MCF 10A (cell line): ENCODE measurements at regions of chr18 and their contacts with region 1.

Region 1: GRCh38 chr18:35513181-35513936 is 15.6 kb upstream of the INO80C start:
- DNase-seq: peak; percentile 86
- H3K4me3 Mint-ChIP-seq: peak overlapping the region; percentile 22
- H3K27ac Mint-ChIP-seq: peak overlapping the region; percentile 89
- H3K4me1 Mint-ChIP-seq: peaks cover 39% of the 10 kb centered on the region
- H3K27me3 Mint-ChIP-seq: no peaks in the 10 kb centered on the region
- CTCF ChIP-seq: no peak

Region 2: GRCh38 chr18:35432565-35433001 is 80.8 kb before region 1 on chr18:
- CTCF ChIA-PET with region 1: no interaction called
- POLR2A ChIA-PET with region 1: no interaction called
- intact Hi-C with region 1: no loop called
- DNase-seq: no peak
- H3K4me3 Mint-ChIP-seq: no peak overlapping the region
- H3K27ac Mint-ChIP-seq: no peak overlapping the region
- H3K4me1 Mint-ChIP-seq: no peaks in the 10 kb centered on the region
- H3K27me3 Mint-ChIP-seq: no peaks in the 10 kb centered on the region
- CTCF ChIP-seq: no peak

Region 3: GRCh38 chr18:35526476-35527120 is 13.2 kb after region 1 on chr18:
- CTCF ChIA-PET with region 1: interaction called, 5 read pairs
- POLR2A ChIA-PET with region 1: interaction called, 15 read pairs
- intact Hi-C with region 1: no loop called
- DNase-seq: peak; percentile 85
- H3K4me3 Mint-ChIP-seq: peak overlapping the region; percentile 64
- H3K27ac Mint-ChIP-seq: peak overlapping the region; percentile 24
- H3K4me1 Mint-ChIP-seq: peaks cover 22% of the 10 kb centered on the region
- H3K27me3 Mint-ChIP-seq: no peaks in the 10 kb centered on the region
- CTCF ChIP-seq: no peak

Region 4: GRCh38 chr18:36179562-36180355 is 666.4 kb after region 1 on chr18:
- CTCF ChIA-PET with region 1: no interaction called
- POLR2A ChIA-PET with region 1: no interaction called
- intact Hi-C with region 1: no loop called
- DNase-seq: peak; percentile 90
- H3K4me3 Mint-ChIP-seq: no peak overlapping the region
- H3K27ac Mint-ChIP-seq: peak overlapping the region; percentile 64
- H3K4me1 Mint-ChIP-seq: peaks cover 30% of the 10 kb centered on the region
- H3K27me3 Mint-ChIP-seq: no peaks in the 10 kb centered on the region
- CTCF ChIP-seq: no peak